GM10248 (cell line): ENCODE measurements at regions of chr3 and their contacts with region 1.

Region 1: DNA sequence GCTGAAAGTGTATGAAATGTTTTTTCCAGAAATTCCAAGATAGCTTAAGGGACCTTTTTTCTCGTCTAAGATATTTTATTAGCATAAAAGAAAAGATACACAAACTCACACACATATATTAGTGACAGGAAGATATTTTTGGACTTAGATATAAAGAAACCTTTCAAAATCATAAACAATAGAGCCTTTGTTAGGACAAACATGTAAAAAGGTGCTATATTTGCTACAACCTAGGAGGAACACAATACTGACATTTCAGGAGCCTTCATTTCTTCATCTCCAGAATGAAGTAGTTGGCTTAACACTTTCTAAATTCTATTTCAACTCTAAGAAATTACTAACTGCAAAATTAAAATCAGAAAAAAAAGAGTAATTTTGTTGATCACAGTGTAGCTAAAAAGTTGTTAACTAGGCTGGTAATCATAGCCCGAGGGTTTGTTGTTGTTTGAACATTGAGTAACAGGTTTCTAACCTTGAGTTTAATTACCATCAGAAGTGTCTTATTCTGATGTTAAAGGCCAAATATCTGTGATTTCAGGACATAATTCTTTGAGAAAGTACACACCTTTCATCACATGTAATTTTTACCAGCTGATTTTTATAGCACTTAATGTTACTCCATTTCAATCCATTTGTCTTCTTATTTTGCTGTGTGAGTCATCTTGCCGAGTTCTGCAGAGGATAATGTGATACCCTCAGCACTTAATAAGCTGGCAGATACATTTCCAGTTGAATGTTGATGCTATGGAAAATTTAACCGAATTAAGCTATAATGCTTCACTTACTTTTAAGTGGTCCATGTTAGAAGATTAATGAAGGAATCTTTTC is 97.3 kb downstream of the MBNL1 start:
- DNase-seq: no peak
- CTCF ChIP-seq: no peak

Region 2: DNA sequence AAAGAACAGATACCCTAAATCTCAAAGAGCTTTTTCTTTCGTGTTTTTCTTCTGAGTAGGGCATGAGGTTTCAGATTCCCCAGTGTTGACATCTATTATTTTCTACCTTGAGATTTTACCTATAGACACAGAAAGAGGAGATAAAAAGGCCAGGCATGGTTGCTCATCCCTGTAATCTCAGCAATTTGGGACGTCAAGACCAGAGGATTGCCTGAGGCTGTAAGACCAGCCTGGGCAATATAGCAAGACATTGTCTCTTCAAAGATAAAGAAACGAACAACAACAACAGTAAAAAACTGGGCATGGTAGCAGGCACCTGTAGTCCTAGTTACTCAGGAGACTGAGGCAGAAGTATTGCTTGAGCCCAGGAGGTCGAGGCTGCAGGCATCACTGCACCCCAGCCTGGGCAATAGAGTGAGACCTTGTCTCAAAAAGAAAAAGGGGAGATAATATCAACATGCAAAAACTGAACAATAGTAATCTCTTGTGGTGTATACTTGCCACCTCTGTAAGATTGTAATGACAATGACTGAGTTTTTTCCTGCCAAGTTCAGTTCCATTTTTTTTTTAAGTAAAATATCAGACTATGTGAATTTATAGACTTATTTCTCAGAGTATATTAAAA is 26.0 kb before region 1 on chr3:
- CTCF ChIA-PET with region 1: no interaction called
- POLR2A ChIA-PET with region 1: no interaction called
- DNase-seq: no peak
- CTCF ChIP-seq: no peak

Region 3: GRCh38 chr3:152376351-152377183 is 10.6 kb after region 1 on chr3:
- CTCF ChIA-PET with region 1: interaction called, 58 read pairs
- POLR2A ChIA-PET with region 1: interaction called, 3 read pairs
- DNase-seq: peak; percentile 24
- CTCF ChIP-seq: no peak